ENCODE measurements at regions of chr22 and their contacts with region 1.

Region 1: DNA sequence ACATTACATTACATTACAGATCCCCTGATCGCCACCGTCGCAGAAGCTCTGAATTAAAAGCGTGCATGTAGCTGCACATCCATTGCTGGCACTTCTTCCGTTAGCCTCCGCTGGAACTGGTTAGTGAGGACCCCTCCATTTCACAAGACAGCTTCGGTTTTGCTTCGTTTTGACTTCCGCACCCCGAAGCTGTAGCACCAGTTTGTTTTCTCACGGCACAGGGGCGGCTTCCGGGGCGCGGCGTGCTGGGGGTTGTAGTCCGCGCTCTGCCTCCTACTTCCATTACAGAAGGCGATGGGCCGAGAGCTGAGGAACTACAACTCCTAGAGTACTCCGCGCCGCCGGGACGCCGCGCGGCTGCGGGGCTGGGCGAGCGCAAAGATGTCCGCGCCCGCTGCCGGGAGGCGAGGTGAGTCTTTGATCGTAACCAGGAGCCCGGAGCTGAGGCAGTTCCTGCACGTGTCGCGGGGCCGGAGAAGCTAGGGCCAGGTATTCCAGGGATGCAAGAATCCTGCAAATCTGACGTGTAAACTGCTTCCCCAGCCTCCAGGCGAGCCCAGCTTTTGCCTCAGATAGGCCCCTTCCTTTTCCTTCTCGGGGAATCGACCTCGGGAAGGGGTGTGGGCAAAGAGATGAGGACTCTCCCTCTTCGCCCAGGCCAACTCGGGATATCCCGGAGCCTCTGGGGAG is at the start of gene PEX26:
- DNase-seq: peak; percentile 89 to 96 (median 94)
- ATAC-seq: peak; percentile 99
- H3K4me3 Mint-ChIP-seq: peak within 1 kb of the TSS; percentile 90 to 99 (median 96)
- H3K27ac Mint-ChIP-seq: peak within 1 kb of the TSS; percentile 96 to 100 (median 99)
- H3K4me1 Mint-ChIP-seq: peaks cover 39 to 66% (median 54%) of the 10 kb centered on the region in 4 donors
- H3K27me3 Mint-ChIP-seq: no peaks in the 10 kb centered on the region
- polyA plus RNA-seq, gene PEX26: 2.6 to 4.5 (median 3.8) TPM

Region 2: DNA sequence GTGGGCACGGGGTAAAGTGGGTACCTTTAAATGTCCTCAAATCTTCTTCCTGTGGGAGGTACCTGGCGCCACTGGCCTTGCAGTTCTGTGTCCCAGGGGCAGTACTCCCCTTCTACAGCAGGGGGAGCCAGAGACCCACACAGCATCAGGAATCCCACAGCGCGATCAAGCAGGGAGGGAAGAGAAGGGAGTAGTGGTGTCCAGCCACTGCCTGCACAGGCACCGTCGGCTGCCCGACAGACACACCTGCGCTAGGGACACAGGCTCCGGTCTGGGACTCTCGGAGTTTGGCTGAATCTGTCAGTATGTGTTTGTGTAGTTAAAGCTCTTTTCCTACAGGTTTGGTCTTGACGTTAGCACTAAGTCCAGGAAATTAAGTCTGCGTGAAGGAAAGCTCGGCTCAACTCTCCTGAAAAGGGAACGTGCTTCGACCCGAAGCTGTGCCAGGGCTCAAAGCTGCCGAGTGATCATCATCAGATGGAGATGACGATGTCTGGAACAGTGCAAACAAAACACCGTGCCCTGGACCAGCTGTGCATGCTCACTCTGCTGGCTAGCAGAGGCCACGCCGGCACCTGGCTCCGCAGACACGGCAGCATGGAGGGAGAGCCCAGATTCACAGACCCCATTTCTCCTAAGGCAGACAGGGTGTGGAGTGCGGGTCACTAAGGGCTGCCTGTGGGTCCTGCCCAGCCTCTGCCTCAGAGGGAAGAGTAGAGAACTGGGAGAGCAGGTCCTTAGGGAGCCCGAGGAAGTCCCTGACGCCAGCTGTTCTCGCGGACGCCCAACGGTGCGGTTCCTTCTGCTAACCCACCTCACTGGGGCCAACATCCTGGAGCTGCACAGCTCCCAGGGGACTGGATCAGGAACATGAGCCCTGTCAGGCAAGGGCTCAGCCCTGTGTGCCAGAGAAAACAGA is 247.5 kb before region 1 on chr22:
- POLR2A ChIA-PET with region 1: interaction called, 24 read pairs
- DNase-seq: peak; percentile 62 to 87 (median 80)
- ATAC-seq: peak; percentile 97 to 99
- H3K4me3 Mint-ChIP-seq: no peak overlapping the region
- H3K27ac Mint-ChIP-seq: peak overlapping the region in 3 of 10 donors; percentile 9 to 62 (median 30)
- H3K4me1 Mint-ChIP-seq: peaks cover 6 to 10% (median 8%) of the 10 kb centered on the region in 4 donors
- H3K27me3 Mint-ChIP-seq: no peaks in the 10 kb centered on the region

Region 3: DNA sequence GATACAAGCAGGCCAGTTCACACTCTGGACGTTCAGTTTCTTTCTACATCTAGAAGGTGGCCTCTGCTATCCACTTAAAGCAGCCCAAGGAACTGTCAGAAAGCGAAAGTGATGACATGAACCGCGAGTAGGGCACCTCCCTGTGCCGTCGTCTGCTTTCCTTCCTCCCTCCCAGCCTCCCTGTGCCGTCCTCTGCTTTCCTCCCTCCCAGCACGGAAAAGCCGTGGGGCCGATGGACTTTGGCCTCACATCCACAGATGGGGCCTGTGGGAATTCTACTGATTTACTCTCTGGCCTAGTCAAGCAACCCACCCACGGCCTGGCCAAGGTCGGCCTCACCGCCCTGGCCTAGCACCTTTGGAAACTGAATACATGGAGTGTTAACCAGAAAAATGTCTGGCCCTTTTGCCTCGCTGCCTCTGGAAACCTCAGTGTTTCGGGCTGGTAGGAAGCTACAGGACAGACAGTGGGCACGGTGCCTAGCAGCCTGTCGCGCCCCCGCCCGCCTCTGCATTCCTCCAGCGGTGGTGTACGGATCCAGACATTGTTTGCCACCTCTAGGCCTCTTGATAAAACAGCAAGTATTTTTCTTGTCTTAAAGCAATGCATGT is 14.2 kb after region 1 on chr22:
- POLR2A ChIA-PET with region 1: no interaction called
- DNase-seq: no peak
- ATAC-seq: peak in 1 of 2 donors; percentile 23
- H3K4me3 Mint-ChIP-seq: peak overlapping the region in 9 of 10 donors; percentile 22 to 81 (median 56)
- H3K27ac Mint-ChIP-seq: peak overlapping the region in 9 of 10 donors; percentile 6 to 95 (median 73)
- H3K4me1 Mint-ChIP-seq: peaks cover 0 to 8% (median 5%) of the 10 kb centered on the region in 4 donors
- H3K27me3 Mint-ChIP-seq: no peaks in the 10 kb centered on the region

Region 4: DNA sequence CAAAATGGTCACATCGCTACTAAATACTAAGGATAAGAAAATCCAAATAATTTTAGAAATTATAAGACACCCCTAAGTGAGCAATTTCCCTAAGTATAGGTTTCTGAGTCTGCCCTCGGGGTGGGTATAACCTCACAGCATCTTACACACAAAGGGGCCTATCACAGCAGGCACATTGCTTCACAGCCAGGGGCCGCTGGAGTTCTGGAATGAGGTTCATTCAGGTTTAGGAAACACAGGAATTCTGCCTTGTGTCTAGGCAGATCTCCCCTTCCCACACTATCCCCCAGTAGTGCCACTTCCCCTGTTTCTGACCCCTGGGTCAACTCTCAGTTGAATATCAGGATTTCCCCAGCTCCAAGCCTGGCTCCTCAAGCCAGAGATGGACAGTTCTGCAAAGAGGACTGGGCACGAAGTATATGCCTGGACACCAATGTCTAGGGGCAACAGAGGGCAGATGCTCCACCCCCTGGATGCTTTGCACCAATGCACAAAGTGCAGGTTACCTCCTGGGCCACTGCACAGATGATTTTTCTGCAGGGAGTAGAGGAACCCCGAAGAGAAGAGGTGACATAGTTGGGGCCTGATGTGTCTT is 44.3 kb after region 1 on chr22:
- POLR2A ChIA-PET with region 1: no interaction called
- DNase-seq: no peak
- ATAC-seq: no peak
- H3K4me3 Mint-ChIP-seq: no peak overlapping the region
- H3K27ac Mint-ChIP-seq: no peak overlapping the region
- H3K4me1 Mint-ChIP-seq: peaks cover 0 to 9% (median 6%) of the 10 kb centered on the region in 4 donors
- H3K27me3 Mint-ChIP-seq: peaks cover 0 to 2% (median 0%) of the 10 kb centered on the region in 5 donors

Region 5: GRCh38 chr22:18152519-18152918 is 74.7 kb after region 1 on chr22:
- POLR2A ChIA-PET with region 1: interaction called, 26 read pairs
- DNase-seq: peak in 2 of 10 donors; percentile 5 to 16
- ATAC-seq: peak; percentile 36 to 49
- H3K4me3 Mint-ChIP-seq: peak overlapping the region; percentile 19 to 91 (median 61)
- H3K27ac Mint-ChIP-seq: peak overlapping the region in 9 of 10 donors; percentile 22 to 85 (median 61)
- H3K4me1 Mint-ChIP-seq: peaks cover 19 to 59% (median 48%) of the 10 kb centered on the region in 4 donors
- H3K27me3 Mint-ChIP-seq: no peaks in the 10 kb centered on the region

Measured in naive thymus-derived CD8-positive, alpha-beta T cell (primary cell).